PC-9 (cell line): ENCODE measurements at regions of chr9 and their contacts with region 1.

Region 1: GRCh38 chr9:19464764-19465585 is 56.2 kb downstream of the ACER2 start:
- DNase-seq: peak; percentile 47 to 60
- H3K4me3 ChIP-seq: peak overlapping the region; percentile 38; the same call in 1 of the 2 replicates
- H3K27ac ChIP-seq: no peak overlapping the region
- H3K4me1 ChIP-seq: no peaks in the 10 kb centered on the region
- H3K27me3 ChIP-seq: no peaks in the 10 kb centered on the region
- CTCF ChIP-seq: peak; percentile 71

Region 2: GRCh38 chr9:18824095-18824666 is 640.8 kb before region 1 on chr9:
- CTCF ChIA-PET with region 1: no interaction called
- POLR2A ChIA-PET with region 1: interaction called, 17 read pairs
- intact Hi-C with region 1: no loop called
- DNase-seq: no peak
- H3K4me3 ChIP-seq: no peak overlapping the region
- H3K27ac ChIP-seq: no peak overlapping the region
- H3K4me1 ChIP-seq: peaks cover 10% of the 10 kb centered on the region; the same call in 1 of the 2 replicates
- H3K27me3 ChIP-seq: no peaks in the 10 kb centered on the region
- CTCF ChIP-seq: peak; percentile 38; the same call in 1 of the 2 replicates

Region 3: DNA sequence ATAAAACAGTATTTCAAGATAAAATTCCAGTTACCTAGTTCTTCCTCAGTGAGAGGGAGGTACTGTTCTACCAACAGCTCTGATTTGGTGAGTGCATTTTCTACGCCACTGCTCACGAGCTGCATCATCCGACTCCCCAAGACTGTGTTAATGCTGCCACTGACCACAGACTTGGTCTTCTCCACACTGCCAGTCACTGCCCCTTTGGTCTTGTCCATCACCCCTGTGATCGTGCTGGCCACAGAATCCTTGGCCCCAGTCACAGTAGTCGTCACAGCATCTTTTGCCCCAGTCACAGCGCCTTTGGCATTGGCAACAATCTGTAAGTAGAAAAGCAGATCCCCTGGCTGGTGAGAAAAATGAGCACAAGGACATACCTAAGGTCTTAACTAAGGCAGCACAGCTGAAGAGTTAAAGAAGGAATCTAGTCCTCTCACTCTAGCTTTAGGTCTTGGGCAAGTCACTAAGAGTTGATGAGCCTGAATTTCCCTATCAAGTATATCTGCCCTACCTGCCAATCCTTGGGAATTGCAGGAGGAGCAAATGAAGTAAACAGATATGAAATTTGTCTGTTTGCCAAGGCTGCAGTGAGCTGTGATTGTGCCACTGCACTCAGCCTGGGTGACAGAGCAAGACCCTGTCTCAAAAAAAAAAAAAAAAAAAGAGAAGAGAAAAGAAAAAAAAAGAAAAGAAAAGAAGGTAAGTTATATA is 344.0 kb before region 1 on chr9:
- CTCF ChIA-PET with region 1: no interaction called
- POLR2A ChIA-PET with region 1: interaction called, 16 read pairs
- intact Hi-C with region 1: no loop called
- DNase-seq: no peak
- H3K4me3 ChIP-seq: no peak overlapping the region
- H3K27ac ChIP-seq: no peak overlapping the region
- H3K4me1 ChIP-seq: peaks cover 7% of the 10 kb centered on the region; the same call in 1 of the 2 replicates
- H3K27me3 ChIP-seq: no peaks in the 10 kb centered on the region
- CTCF ChIP-seq: no peak

Region 4: DNA sequence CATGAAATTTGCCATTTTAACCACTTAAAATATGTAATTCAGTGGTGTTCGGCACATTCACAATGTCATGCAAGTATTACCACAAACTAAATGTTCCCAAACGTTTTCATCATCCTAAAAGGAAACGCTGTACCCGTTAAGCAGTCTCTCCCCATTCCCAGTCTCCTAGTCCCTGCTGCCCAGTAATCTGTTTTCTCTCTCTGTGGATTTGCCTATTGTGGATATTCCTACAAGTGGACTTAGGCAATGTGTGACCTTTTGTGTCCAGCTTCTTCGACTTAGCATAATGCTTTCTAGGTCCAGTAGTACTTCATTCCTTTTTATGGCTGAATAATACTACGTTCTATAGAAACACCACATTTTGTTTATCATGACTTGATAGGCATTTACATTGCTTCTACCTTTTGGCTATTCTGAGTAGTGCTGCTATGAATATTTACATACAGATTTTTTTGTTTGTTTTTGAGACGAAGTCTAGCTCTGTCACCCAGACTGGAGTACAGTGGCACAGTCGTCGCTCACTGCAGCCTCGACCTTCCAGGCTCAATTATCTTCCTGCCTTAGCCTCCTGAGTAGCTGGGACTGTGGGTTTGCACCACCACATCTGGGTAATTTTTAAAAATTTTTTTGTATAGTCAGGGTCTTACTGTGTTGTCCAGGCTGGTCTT is 221.5 kb before region 1 on chr9:
- CTCF ChIA-PET with region 1: no interaction called
- POLR2A ChIA-PET with region 1: no interaction called
- intact Hi-C with region 1: no loop called
- DNase-seq: no peak
- H3K4me3 ChIP-seq: no peak overlapping the region
- H3K27ac ChIP-seq: no peak overlapping the region
- H3K4me1 ChIP-seq: no peaks in the 10 kb centered on the region
- H3K27me3 ChIP-seq: no peaks in the 10 kb centered on the region
- CTCF ChIP-seq: no peak

Region 5: DNA sequence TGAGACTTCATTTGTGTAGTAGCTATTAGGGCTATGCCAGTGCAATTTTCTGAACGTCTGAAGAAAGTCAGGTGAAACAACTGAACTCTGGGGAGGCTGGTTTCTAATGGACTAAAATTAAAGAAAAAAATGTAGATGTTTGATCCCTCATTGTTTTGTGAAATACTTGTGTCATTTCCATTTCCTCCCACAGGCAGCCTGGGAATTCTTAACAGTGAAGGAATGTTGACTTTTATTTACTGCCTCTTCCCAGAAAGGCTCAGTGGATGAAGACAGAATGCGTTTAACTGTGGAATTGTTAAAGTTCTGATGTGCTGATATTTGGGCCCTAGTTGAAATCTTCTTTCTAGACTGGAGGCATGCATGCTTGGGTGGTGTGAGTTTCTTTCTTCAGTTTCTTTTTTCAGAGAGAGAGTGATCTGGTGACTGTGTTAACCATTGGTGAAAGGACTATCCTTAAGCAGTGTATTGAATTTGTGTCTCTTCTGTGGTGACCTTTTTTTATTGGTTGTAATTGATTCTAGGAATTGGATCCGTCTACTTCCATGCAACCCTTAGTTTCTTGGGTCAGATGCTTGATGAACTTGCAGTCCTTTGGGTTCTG is 40.7 kb before region 1 on chr9:
- CTCF ChIA-PET with region 1: interaction called, 18 read pairs
- POLR2A ChIA-PET with region 1: no interaction called
- intact Hi-C with region 1: no loop called
- DNase-seq: no peak
- H3K4me3 ChIP-seq: no peak overlapping the region
- H3K27ac ChIP-seq: no peak overlapping the region
- H3K4me1 ChIP-seq: 0 out of 2 replicates have a peak, but pooled peaks cover 3% of the 10 kb centered on the region
- H3K27me3 ChIP-seq: no peaks in the 10 kb centered on the region
- CTCF ChIP-seq: no peak

Region 6: GRCh38 chr9:19564396-19565061 is 99.6 kb after region 1 on chr9:
- CTCF ChIA-PET with region 1: interaction called, 10 read pairs
- POLR2A ChIA-PET with region 1: no interaction called
- intact Hi-C with region 1: no loop called
- DNase-seq: no peak
- H3K4me3 ChIP-seq: no peak overlapping the region
- H3K27ac ChIP-seq: no peak overlapping the region
- H3K4me1 ChIP-seq: no peaks in the 10 kb centered on the region
- H3K27me3 ChIP-seq: no peaks in the 10 kb centered on the region
- CTCF ChIP-seq: no peak